ENCODE measurements at regions of chr13 and their contacts with region 1.

Region 1: GRCh38 chr13:101514788-101515187 is 62.3 kb downstream of the ITGBL1 start:
- DNase-seq: no peak
- H3K4me3 ChIP-seq: no peak overlapping the region
- H3K27ac ChIP-seq: no peak overlapping the region
- H3K4me1 ChIP-seq: no peaks in the 10 kb centered on the region
- H3K27me3 ChIP-seq: no peaks in the 10 kb centered on the region
- CTCF ChIP-seq: peak; percentile 30 to 55 (median 45)
- POLR2A ChIP-seq: no peak

Region 2: GRCh38 chr13:99677116-99677951 is 1837.5 kb before region 1 on chr13:
- intact Hi-C with region 1: loop called (anchors 5 kb)
- DNase-seq: no peak
- H3K4me3 ChIP-seq: no peak overlapping the region
- H3K27ac ChIP-seq: no peak overlapping the region
- H3K4me1 ChIP-seq: no peaks in the 10 kb centered on the region
- H3K27me3 ChIP-seq: no peaks in the 10 kb centered on the region
- CTCF ChIP-seq: no peak
- POLR2A ChIP-seq: no peak

Region 3: DNA sequence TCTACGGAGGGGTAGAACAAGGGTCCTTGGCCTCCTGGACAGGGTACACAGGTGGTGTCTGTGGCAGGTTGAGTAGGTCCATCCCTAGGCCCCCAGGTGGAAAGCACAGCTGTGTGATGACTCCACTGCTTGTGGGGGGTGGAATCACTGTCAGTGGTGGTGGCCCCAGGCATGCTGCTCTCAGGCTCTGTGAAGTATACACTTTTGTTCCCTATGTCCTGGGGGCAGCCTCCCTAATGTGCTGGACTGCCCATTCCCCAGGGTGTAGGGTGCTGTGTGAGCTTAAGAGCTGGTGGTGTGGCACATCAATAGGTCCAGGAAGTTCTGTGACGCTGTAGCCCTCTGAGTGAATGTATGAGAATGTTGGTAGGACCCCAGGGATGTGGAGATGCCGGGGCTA is 1748.7 kb after region 1 on chr13:
- intact Hi-C with region 1: no loop called
- DNase-seq: no peak
- H3K4me3 ChIP-seq: no peak overlapping the region
- H3K27ac ChIP-seq: no peak overlapping the region
- H3K4me1 ChIP-seq: no peaks in the 10 kb centered on the region
- H3K27me3 ChIP-seq: no peaks in the 10 kb centered on the region
- CTCF ChIP-seq: no peak
- POLR2A ChIP-seq: no peak